Activated naive CD8-positive, alpha-beta T cell treated with anti-CD3 and anti-CD28 coated beads, Interleukin-2, amount 10 ng/mL, durations not matched to agents 7 days and 5 days (primary cell): ENCODE measurements at regions of chr14 and their contacts with region 1.

Region 1: DNA sequence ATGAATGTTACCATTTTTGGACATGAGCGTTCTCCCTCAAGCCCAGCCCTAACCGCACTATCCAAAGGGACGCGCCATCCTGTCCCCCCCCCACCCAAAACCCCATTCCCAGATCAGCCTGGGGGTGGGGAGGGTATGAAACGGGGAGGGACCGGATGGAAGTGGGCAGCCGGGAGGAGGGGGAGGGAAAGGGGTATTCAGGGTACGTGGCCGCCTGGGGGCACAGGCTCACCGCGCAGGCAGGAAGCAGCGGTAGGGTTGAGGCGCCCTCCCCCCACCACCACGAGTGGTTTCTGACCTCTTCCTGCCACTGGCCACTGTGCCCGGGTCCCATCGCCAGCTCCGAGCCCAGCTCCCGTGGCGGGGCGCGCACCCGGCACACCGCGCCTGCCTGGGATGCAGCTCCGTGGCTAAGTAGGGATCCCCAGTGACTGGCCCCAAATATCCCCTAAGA is 1.4 kb downstream of the ACTN1 start:
- DNase-seq: peak; percentile 86
- ATAC-seq: peak; percentile 35
- H3K4me3 Mint-ChIP-seq: peak overlapping the region; percentile 86
- H3K27ac Mint-ChIP-seq: peak overlapping the region; percentile 86
- H3K4me1 Mint-ChIP-seq: peaks cover 40% of the 10 kb centered on the region
- H3K27me3 Mint-ChIP-seq: peaks cover 6% of the 10 kb centered on the region

Region 2: DNA sequence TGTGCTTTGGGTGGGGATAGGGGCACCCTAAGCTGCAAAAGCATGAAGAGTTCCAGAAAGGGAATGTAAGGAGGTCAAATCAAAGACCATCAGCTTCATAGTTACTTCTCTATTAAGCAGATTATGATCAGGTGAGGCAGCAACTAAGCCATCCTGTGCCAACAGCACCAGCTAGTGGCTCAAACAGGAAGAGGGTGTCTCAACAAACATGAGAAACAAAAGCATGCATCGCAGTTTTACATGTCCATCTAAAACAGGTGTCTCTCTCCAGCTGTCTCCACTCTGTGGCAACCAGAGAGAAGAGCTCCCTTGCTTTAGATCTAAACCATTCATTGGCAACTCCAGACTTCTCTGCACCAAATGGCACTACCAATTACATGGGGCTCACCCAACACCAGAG is 51.5 kb before region 1 on chr14:
- POLR2A ChIA-PET with region 1: interaction called, 10 read pairs
- DNase-seq: no peak
- ATAC-seq: no peak
- H3K4me3 Mint-ChIP-seq: no peak overlapping the region
- H3K27ac Mint-ChIP-seq: peak overlapping the region; percentile 43
- H3K4me1 Mint-ChIP-seq: peaks cover 44% of the 10 kb centered on the region
- H3K27me3 Mint-ChIP-seq: no peaks in the 10 kb centered on the region

Region 3: GRCh38 chr14:68951042-68951914 is 26.5 kb before region 1 on chr14:
- POLR2A ChIA-PET with region 1: interaction called, 11 read pairs
- DNase-seq: no peak
- ATAC-seq: no peak
- H3K4me3 Mint-ChIP-seq: no peak overlapping the region
- H3K27ac Mint-ChIP-seq: peak overlapping the region; percentile 45
- H3K4me1 Mint-ChIP-seq: peaks cover 67% of the 10 kb centered on the region
- H3K27me3 Mint-ChIP-seq: no peaks in the 10 kb centered on the region